ENCODE measurements at regions of chr6 and their contacts with region 1.

Region 1: GRCh38 chr6:111367393-111368088 is 115.5 kb downstream of the REV3L start:
- DNase-seq: peak; percentile 19
- H3K4me3 Mint-ChIP-seq: no peak overlapping the region
- H3K27ac Mint-ChIP-seq: peak overlapping the region; percentile 24
- H3K4me1 Mint-ChIP-seq: peaks cover 14% of the 10 kb centered on the region
- H3K27me3 Mint-ChIP-seq: no peaks in the 10 kb centered on the region

Region 2: GRCh38 chr6:111338843-111339242 is 28.7 kb before region 1 on chr6:
- intact Hi-C with region 1: loop called (anchors 2 kb)
- DNase-seq: no peak
- H3K4me3 Mint-ChIP-seq: no peak overlapping the region
- H3K27ac Mint-ChIP-seq: peak overlapping the region; percentile 1
- H3K4me1 Mint-ChIP-seq: peaks cover 20% of the 10 kb centered on the region
- H3K27me3 Mint-ChIP-seq: no peaks in the 10 kb centered on the region

Region 3: DNA sequence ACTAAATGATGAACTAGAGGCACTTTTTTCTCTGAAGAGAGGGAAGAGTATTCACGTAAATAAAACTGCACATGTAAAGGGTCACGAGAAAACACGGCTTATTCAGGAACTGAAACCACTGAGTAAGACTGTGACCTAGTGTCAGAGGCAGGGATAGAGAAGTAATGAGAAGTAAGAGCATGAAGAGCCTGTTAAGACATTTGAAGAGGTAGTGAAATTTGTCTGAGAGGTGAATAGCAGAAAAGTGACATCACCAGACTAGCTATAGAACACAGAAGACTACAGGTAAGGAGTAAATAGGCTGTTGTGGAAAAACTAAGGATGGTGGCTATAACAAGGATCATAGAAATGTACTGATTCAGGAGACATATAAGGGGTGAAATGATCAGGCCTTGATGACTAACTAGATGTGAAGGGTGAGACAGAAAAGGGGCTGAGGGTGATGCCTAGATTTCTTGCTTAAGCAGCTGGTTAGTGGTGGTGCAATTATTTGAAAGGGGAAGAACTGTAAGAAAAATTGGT is 38.7 kb after region 1 on chr6:
- intact Hi-C with region 1: loop called (anchors 2 kb)
- DNase-seq: no peak
- H3K4me3 Mint-ChIP-seq: no peak overlapping the region
- H3K27ac Mint-ChIP-seq: peak overlapping the region; percentile 71
- H3K4me1 Mint-ChIP-seq: peaks cover 14% of the 10 kb centered on the region
- H3K27me3 Mint-ChIP-seq: no peaks in the 10 kb centered on the region

Region 4: DNA sequence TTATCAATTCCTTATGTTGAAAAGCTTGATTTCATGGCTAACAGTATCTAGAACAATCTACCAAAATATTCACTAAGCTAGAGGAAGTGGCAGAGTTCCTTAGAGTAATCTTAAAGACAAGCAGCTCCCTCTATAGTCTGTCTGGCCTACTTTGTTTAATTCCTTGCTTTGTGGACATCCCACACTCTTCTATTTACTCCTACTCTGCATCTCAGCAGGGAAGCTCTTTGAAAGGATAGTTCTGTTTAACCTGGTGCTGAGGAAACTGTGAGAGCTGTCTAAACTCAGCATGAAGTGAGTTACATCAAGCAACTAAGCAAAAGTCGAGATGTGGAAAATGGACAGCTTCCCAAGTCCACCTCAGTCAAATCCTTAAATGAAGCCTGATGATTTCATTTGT is 111.2 kb after region 1 on chr6:
- intact Hi-C with region 1: loop called (anchors 2 kb)
- DNase-seq: no peak
- H3K4me3 Mint-ChIP-seq: no peak overlapping the region
- H3K27ac Mint-ChIP-seq: no peak overlapping the region
- H3K4me1 Mint-ChIP-seq: peaks cover 42% of the 10 kb centered on the region
- H3K27me3 Mint-ChIP-seq: no peaks in the 10 kb centered on the region

Region 5: GRCh38 chr6:111625461-111626391 is 258.2 kb after region 1 on chr6:
- intact Hi-C with region 1: no loop called
- DNase-seq: no peak
- H3K4me3 Mint-ChIP-seq: no peak overlapping the region
- H3K27ac Mint-ChIP-seq: no peak overlapping the region
- H3K4me1 Mint-ChIP-seq: no peaks in the 10 kb centered on the region
- H3K27me3 Mint-ChIP-seq: peaks cover 10% of the 10 kb centered on the region

Region 6: DNA sequence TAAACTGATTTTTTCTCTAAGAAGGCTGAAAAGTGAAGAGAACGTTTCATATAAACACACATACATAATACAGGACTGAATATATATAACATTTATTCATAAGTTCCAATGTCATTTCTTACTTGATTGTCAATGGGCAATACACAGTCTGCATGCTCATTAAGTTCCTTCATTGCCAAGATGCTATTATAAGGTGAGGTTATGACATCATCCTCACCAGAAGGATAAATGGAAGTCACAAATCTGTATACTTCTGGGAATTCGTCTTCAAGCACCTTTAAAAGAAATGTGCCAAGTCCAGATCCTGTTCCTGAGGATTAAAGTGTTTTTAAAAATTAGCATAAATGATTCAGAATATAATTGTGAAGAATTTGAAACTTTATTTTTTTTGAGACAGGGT is 708.7 kb after region 1 on chr6:
- intact Hi-C with region 1: no loop called
- DNase-seq: no peak
- H3K4me3 Mint-ChIP-seq: no peak overlapping the region
- H3K27ac Mint-ChIP-seq: no peak overlapping the region
- H3K4me1 Mint-ChIP-seq: no peaks in the 10 kb centered on the region
- H3K27me3 Mint-ChIP-seq: no peaks in the 10 kb centered on the region

Measured in activated T-helper 2 cell treated with anti-CD3 and anti-CD28 coated beads, Interferon-gamma antibody, Interleukin-2, Interleukin-4, amounts not matched to agents 10 μg/mL and 5 μg/mL and 100 μg/mL, durations not matched to agents 14 hours and 24 hours and 36 hours (primary cell).